Mammary epithelial cell (primary cell): ENCODE measurements at regions of chr2 and their contacts with region 1.

Region 1: DNA sequence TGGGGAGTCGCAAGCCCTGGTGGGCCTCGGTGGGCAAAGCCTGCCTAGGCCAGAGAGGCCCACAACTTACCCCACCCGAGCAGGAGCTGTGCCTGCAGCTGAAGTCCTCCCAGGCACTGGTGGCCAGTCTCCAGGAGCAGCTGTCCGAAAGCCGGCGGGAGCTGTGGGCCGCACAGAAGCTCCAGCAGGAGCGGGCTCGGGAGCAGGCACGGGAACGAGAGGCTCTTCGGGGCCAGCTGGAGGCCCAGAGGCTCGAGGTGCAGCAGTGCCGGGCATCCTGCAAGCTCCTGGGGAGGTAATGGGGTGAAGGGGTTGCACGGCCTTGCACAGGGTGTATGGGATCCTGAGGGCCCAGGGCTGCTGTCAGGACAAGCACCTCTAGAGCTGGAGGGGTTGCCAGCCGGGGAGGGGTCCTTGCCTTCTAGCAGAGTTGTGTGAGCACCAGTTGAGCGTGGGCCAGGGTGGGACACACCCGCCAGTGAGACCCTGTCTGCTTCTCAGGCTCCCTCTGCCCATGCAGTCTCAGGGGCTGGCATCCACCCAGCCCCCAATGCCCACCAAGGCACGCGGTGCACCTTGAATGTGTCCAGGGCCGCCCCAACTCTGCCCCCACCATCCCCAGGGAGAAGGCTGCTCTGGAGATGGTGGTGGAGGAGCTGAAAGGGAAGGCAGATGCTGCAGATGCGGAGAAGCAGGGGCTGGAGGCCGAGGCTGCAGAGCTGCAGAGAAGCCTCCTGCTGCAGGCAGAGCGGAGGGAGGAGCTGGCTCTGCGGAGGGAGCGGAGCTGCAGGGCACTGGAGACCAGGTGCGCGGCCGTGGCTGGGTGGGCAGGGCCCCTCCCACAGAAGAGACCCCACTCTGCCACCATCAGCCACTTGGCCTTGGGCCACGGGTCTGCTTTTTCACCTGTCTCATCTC is 27.2 kb downstream of the CROCC2 start:
- DNase-seq: no peak
- H3K4me3 ChIP-seq: no peak overlapping the region
- H3K27ac ChIP-seq: no peak overlapping the region
- H3K4me1 ChIP-seq: no peaks in the 10 kb centered on the region
- H3K27me3 ChIP-seq: peaks cover 14% of the 10 kb centered on the region
- CTCF ChIP-seq: no peak

Region 2: GRCh38 chr2:240881913-240882312 is 51.4 kb before region 1 on chr2:
- CTCF ChIA-PET with region 1: no interaction called
- dilution Hi-C with region 1: loop called (anchors 5 kb)
- in situ Hi-C with region 1: no loop called
- intact Hi-C with region 1: no loop called
- DNase-seq: no peak
- H3K4me3 ChIP-seq: no peak overlapping the region
- H3K27ac ChIP-seq: no peak overlapping the region
- H3K4me1 ChIP-seq: no peaks in the 10 kb centered on the region
- H3K27me3 ChIP-seq: no peaks in the 10 kb centered on the region
- CTCF ChIP-seq: no peak

Region 3: GRCh38 chr2:240983361-240983995 is 50.2 kb after region 1 on chr2:
- CTCF ChIA-PET with region 1: no interaction called
- dilution Hi-C with region 1: no loop called
- in situ Hi-C with region 1: no loop called
- intact Hi-C with region 1: no loop called
- DNase-seq: peak; percentile 50
- H3K4me3 ChIP-seq: no peak overlapping the region
- H3K27ac ChIP-seq: no peak overlapping the region
- H3K4me1 ChIP-seq: no peaks in the 10 kb centered on the region
- H3K27me3 ChIP-seq: peaks cover 8% of the 10 kb centered on the region
- CTCF ChIP-seq: peak; percentile 16 to 58